Sciatic nerve (tissue), 2 donors: ENCODE measurements at regions of chr2 and their contacts with region 1.

Region 1: DNA sequence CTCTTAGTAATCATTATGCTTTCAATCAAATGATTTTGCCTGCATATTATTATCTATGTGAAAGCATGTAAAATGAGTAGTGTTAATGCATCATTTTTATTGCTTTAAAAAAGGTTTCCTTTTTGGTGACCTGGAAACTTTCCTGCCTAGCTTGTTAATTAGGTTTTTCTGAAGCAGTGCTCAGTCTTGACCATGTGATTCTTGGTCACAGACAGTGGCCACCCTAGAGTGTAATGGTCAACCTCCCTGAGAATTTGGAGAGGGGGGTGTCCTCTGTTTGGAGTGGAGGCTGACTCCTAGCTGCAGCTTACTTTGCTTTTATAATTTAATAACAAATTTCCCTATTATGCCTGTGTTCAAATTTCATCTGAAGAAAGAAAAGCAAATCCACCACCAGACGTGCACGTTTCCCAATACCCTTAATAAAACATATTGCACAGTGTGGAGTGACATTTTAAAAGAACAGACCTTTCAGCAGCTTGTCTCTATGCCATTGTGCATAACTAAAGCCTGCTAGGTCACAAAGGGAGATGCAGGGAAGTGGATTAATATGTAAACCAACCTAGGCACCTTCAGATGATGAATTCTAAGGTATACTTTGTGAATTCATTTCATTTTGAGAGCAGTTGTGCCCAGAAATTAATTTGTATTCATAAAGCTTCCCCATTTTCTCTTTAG is 130.6 kb downstream of the RPRM start:
- DNase-seq: no peak
- ATAC-seq: no peak

Region 2: DNA sequence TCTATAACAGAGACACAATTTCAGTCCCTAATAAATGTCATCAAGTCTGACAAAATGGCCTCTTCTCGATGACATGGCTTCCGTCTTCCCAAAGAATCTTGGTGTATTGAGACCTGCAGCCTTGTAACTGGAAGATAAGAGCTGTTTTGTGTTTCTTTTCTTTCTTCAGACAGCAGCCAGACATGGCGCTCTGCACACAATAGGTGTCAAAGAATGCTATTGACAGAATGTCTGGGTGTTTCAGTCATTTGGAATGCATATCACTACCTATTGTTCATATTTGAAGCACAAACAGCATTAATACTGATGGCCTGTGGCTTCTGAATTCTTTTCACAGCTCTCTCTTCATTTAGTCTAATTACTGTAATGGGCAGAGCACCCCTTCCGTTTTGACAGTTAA is 214.2 kb before region 1 on chr2:
- intact Hi-C with region 1: no loop called
- DNase-seq: no peak
- ATAC-seq: no peak

Region 3: DNA sequence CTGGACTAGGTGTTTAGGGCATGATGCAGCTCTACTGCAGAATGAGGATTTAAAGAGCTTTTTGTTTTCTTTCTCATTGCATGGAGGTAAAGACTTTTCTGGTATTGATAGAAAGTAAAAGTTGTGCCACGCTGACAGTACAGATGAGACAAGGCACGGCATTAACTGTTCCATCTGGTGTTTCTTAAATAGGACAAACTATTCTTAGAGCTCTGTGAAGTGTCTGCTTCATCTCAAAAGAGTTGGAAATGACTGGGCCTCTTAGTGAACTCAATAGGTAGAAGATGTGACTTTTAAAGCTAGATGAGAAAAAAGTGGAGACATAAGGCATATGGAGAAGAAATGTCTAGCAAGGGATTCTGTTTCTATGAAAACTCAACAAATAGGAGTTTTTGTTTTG is 191.2 kb before region 1 on chr2:
- intact Hi-C with region 1: no loop called
- DNase-seq: no peak
- ATAC-seq: no peak

Region 4: DNA sequence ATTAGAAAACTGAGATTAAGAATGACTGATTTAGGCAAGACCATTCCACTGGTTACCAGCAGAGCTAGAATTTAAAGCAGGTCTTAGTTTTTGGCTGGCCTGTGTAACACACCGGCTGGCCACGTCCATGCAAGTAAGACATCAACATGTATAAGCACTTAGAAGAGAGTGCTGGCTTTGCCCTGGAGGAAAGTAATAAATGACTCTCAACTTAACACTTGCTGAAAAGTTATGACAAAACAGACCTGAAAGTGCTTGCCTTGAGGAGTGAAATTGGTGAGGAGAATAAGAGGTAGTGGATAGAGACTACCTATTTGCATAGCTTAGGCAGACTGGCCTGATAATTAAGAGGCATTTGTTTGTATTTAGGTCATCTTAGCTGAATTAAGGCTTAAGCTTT is 1184.8 kb after region 1 on chr2:
- intact Hi-C with region 1: loop called (anchors 5 kb)
- DNase-seq: no peak
- ATAC-seq: no peak